ENCODE measurements at regions of chr5 and their contacts with region 1.

Region 1: GRCh38 chr5:80481019-80481893 is 6.6 kb upstream of the FAM151B start:
- DNase-seq: peak; percentile 48
- H3K4me3 Mint-ChIP-seq: no peak overlapping the region
- H3K27ac Mint-ChIP-seq: peak overlapping the region; percentile 25
- H3K4me1 Mint-ChIP-seq: no peaks in the 10 kb centered on the region
- H3K27me3 Mint-ChIP-seq: no peaks in the 10 kb centered on the region

Region 2: GRCh38 chr5:80308526-80308925 is 172.7 kb before region 1 on chr5:
- CTCF ChIA-PET with region 1: no interaction called
- POLR2A ChIA-PET with region 1: no interaction called
- intact Hi-C with region 1: no loop called
- DNase-seq: no peak
- H3K4me3 Mint-ChIP-seq: no peak overlapping the region
- H3K27ac Mint-ChIP-seq: no peak overlapping the region
- H3K4me1 Mint-ChIP-seq: no peaks in the 10 kb centered on the region
- H3K27me3 Mint-ChIP-seq: no peaks in the 10 kb centered on the region

Region 3: DNA sequence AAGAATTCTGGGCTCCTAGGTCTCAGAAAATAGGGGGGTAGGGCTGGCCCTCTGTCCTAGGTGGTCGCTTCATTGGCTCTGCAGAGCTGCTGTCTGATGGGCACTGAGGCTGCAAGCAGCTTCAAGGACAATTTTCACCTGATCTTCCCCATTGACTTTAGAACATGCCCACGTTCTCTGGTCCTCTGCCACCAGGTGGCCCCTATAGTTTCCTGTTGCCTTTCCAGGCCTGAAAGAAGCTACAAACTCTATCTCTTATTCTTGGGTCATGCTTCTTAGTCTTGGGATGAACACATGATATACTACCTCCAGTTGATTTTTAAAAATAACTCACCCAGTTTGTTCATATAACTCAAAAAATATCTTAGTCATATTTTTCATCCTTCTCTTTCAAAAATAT is 135.2 kb before region 1 on chr5:
- CTCF ChIA-PET with region 1: no interaction called
- POLR2A ChIA-PET with region 1: no interaction called
- intact Hi-C with region 1: loop called (anchors 1 kb)
- DNase-seq: peak; percentile 52
- H3K4me3 Mint-ChIP-seq: no peak overlapping the region
- H3K27ac Mint-ChIP-seq: no peak overlapping the region
- H3K4me1 Mint-ChIP-seq: no peaks in the 10 kb centered on the region
- H3K27me3 Mint-ChIP-seq: peaks cover 6% of the 10 kb centered on the region

Region 4: DNA sequence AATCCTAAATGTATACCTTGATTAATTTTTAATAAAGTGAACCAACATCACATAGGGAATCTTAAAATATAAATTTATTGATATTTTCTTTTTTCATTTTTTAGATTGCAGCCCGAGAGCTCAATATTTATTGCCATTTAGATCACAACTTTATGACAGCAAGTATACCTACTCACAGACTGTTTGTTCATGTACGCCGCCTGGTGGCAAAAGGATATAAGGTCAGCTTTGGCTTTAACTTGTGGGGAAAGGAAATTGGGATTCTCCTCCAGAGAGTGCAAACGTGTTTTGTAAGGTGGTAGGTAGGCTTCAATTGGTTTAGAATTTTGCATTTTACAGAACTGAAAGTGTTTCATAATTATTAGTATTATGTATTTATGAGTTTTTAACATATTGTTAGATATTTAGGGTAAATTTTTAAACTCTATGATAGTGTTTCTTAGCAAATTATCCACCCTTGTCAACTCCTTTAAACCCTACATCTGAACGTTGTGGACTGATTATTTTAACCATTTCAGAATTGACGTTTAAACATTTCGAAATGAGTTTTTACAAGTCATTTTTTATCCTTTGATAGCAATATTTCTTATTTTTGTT is 191.0 kb after region 1 on chr5:
- CTCF ChIA-PET with region 1: interaction called, 17 read pairs
- POLR2A ChIA-PET with region 1: no interaction called
- intact Hi-C with region 1: loop called (anchors 1 kb)
- DNase-seq: peak; percentile 78
- H3K4me3 Mint-ChIP-seq: no peak overlapping the region
- H3K27ac Mint-ChIP-seq: no peak overlapping the region
- H3K4me1 Mint-ChIP-seq: no peaks in the 10 kb centered on the region
- H3K27me3 Mint-ChIP-seq: no peaks in the 10 kb centered on the region

Measured in activated CD4-positive, alpha-beta memory T cell treated with anti-CD3 and anti-CD28 coated beads for 36 hours (primary cell).